WTC11 (cell line): ENCODE measurements at regions of chr15 and their contacts with region 1.

Region 1: GRCh38 chr15:80866936-80867335 is 87.8 kb downstream of the CEMIP start:
- DNase-seq: peak; percentile 30
- ATAC-seq: peak; percentile 92
- H3K4me3 Mint-ChIP-seq: peak overlapping the region; percentile 28
- H3K27ac Mint-ChIP-seq: peak overlapping the region; percentile 87
- H3K4me1 Mint-ChIP-seq: peaks cover 53% of the 10 kb centered on the region
- H3K27me3 Mint-ChIP-seq: peaks cover 3% of the 10 kb centered on the region; the same call in 1 of the 2 replicates
- CTCF ChIP-seq: no peak

Region 2: GRCh38 chr15:80856809-80857377 is 10.0 kb before region 1 on chr15:
- CTCF ChIA-PET with region 1: interaction called, 11 read pairs
- POLR2A ChIA-PET with region 1: no interaction called
- DNase-seq: peak; percentile 35
- ATAC-seq: peak; percentile 65
- H3K4me3 Mint-ChIP-seq: no peak overlapping the region
- H3K27ac Mint-ChIP-seq: no peak overlapping the region
- H3K4me1 Mint-ChIP-seq: peaks cover 4% of the 10 kb centered on the region; the same call in 1 of the 2 replicates
- H3K27me3 Mint-ChIP-seq: peaks cover 3% of the 10 kb centered on the region; the same call in 1 of the 2 replicates
- CTCF ChIP-seq: no peak

Region 3: GRCh38 chr15:81029414-81030300 is 162.7 kb after region 1 on chr15:
- CTCF ChIA-PET with region 1: no interaction called
- POLR2A ChIA-PET with region 1: no interaction called
- DNase-seq: no peak
- ATAC-seq: no peak
- H3K4me3 Mint-ChIP-seq: no peak overlapping the region
- H3K27ac Mint-ChIP-seq: no peak overlapping the region
- H3K4me1 Mint-ChIP-seq: peaks cover 15% of the 10 kb centered on the region
- H3K27me3 Mint-ChIP-seq: no peaks in the 10 kb centered on the region; the same call in 1 of the 2 replicates
- CTCF ChIP-seq: no peak